ENCODE measurements at regions of chr13 and their contacts with region 1.

Region 1: DNA sequence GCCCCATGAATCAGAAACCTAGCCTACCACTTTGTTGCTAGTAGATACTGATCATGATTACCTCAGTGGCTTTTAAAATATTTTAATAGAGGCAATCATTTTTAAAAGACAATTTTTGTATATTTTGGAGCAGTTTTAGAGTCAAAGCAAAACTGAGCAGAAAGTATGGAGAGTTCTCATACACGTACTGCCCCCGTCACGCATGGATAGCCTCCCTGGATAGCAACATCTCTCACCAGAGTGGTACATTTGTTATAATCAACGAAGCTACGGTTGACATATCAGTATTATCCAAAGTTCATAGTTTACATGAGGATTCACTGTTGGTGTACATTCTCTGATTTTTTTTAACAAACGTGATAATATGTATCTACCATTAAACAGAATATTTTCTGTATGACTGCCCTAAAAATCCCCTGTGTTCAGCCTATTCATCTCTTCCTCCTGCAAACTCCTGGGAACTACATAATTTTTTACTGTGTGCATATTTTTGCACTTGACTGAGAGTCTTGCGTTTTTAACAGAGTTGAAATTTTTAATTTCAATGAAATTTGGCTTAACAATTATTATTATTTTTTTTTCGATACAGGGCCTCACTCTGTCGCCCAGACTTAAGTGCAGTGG is 1436.8 kb upstream of the PCDH9 start:
- DNase-seq: no peak
- ATAC-seq: no peak
- H3K4me3 ChIP-seq: no peak overlapping the region
- H3K4me3 Mint-ChIP-seq: no peak overlapping the region
- H3K27ac ChIP-seq: no peak overlapping the region
- H3K27ac Mint-ChIP-seq: no peak overlapping the region
- H3K4me1 ChIP-seq: no peaks in the 10 kb centered on the region
- H3K4me1 Mint-ChIP-seq: no peaks in the 10 kb centered on the region
- H3K27me3 ChIP-seq: no peaks in the 10 kb centered on the region
- H3K27me3 Mint-ChIP-seq: no peaks in the 10 kb centered on the region
- CTCF ChIP-seq: no peak

Region 2: DNA sequence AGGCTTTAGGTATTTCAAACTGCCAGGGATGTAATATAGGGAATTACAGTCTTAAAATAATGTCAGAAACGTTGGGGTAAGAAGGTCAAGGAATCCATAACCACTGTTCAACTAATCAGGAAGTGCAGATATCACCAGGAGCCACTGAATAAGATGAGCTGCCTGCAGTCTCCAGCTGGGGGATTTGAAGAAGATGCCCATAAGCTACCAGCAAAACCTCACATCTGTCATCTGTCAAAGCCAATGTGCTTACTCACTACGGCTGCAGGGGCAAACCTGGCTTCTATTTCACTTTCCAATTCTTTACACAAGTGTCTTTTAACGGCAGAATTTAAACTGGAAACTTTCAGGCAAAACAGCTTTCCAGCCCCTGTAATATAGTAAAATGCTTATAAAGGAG is 30.7 kb after region 1 on chr13:
- CTCF ChIA-PET with region 1: no interaction called
- POLR2A ChIA-PET with region 1: no interaction called
- intact Hi-C with region 1: loop called (anchors 1 kb)
- DNase-seq: no peak
- ATAC-seq: no peak
- H3K4me3 ChIP-seq: no peak overlapping the region
- H3K4me3 Mint-ChIP-seq: no peak overlapping the region
- H3K27ac ChIP-seq: no peak overlapping the region
- H3K27ac Mint-ChIP-seq: no peak overlapping the region
- H3K4me1 ChIP-seq: no peaks in the 10 kb centered on the region
- H3K4me1 Mint-ChIP-seq: no peaks in the 10 kb centered on the region
- H3K27me3 ChIP-seq: no peaks in the 10 kb centered on the region
- H3K27me3 Mint-ChIP-seq: no peaks in the 10 kb centered on the region
- CTCF ChIP-seq: no peak